Activated CD8-positive, alpha-beta T cell treated with anti-CD3 and anti-CD28 coated beads, Interleukin-2, amount 10 ng/mL, durations not matched to agents 7 days and 5 days (primary cell): ENCODE measurements at regions of chr2 and their contacts with region 1.

Region 1: GRCh38 chr2:233443468-233444183 is 89.3 kb downstream of the DGKD start:
- DNase-seq: peak; percentile 91
- ATAC-seq: peak; percentile 80
- H3K4me3 Mint-ChIP-seq: no peak overlapping the region
- H3K27ac Mint-ChIP-seq: peak overlapping the region; percentile 56
- H3K4me1 Mint-ChIP-seq: peaks cover 33% of the 10 kb centered on the region
- H3K27me3 Mint-ChIP-seq: no peaks in the 10 kb centered on the region

Region 2: GRCh38 chr2:233331536-233331935 is 112.1 kb before region 1 on chr2:
- CTCF ChIA-PET with region 1: interaction called, 11 read pairs
- POLR2A ChIA-PET with region 1: no interaction called
- DNase-seq: peak; percentile 92
- ATAC-seq: peak; percentile 95
- H3K4me3 Mint-ChIP-seq: peak overlapping the region; percentile 61
- H3K27ac Mint-ChIP-seq: peak overlapping the region; percentile 99
- H3K4me1 Mint-ChIP-seq: peaks cover 60% of the 10 kb centered on the region
- H3K27me3 Mint-ChIP-seq: no peaks in the 10 kb centered on the region

Region 3: GRCh38 chr2:233404222-233404621 is 39.4 kb before region 1 on chr2:
- CTCF ChIA-PET with region 1: interaction called, 308 read pairs
- POLR2A ChIA-PET with region 1: interaction called, 3 read pairs
- DNase-seq: peak; percentile 77
- ATAC-seq: peak; percentile 40
- H3K4me3 Mint-ChIP-seq: no peak overlapping the region
- H3K27ac Mint-ChIP-seq: peak overlapping the region; percentile 31
- H3K4me1 Mint-ChIP-seq: peaks cover 68% of the 10 kb centered on the region
- H3K27me3 Mint-ChIP-seq: no peaks in the 10 kb centered on the region

Region 4: GRCh38 chr2:233418761-233419625 is 24.6 kb before region 1 on chr2:
- CTCF ChIA-PET with region 1: interaction called, 81 read pairs
- POLR2A ChIA-PET with region 1: interaction called, 3 read pairs
- DNase-seq: peak; percentile 64
- ATAC-seq: peak; percentile 48
- H3K4me3 Mint-ChIP-seq: peak overlapping the region; percentile 67
- H3K27ac Mint-ChIP-seq: peak overlapping the region; percentile 92
- H3K4me1 Mint-ChIP-seq: peaks cover 97% of the 10 kb centered on the region
- H3K27me3 Mint-ChIP-seq: no peaks in the 10 kb centered on the region